Endothelial cell of umbilical vein (primary cell): ENCODE measurements at regions of chr12 and their contacts with region 1.

Region 1: GRCh38 chr12:4867384-4867783 is 42.3 kb upstream of the KCNA1 start:
- DNase-seq: no peak
- H3K4me3 ChIP-seq: no peak overlapping the region
- H3K27ac ChIP-seq: no peak overlapping the region
- H3K4me1 ChIP-seq: no peaks in the 10 kb centered on the region
- H3K27me3 ChIP-seq: no peaks in the 10 kb centered on the region
- CTCF ChIP-seq: no peak
- POLR2A ChIP-seq: no peak

Region 2: GRCh38 chr12:4849115-4849541 is 18.3 kb before region 1 on chr12:
- CTCF ChIA-PET with region 1: interaction called, 13 read pairs
- POLR2A ChIA-PET with region 1: no interaction called
- dilution Hi-C with region 1: no loop called
- intact Hi-C with region 1: no loop called
- DNase-seq: peak; percentile 32
- H3K4me3 ChIP-seq: no peak overlapping the region
- H3K27ac ChIP-seq: no peak overlapping the region
- H3K4me1 ChIP-seq: no peaks in the 10 kb centered on the region
- H3K27me3 ChIP-seq: no peaks in the 10 kb centered on the region
- CTCF ChIP-seq: peak; percentile 55 to 65
- POLR2A ChIP-seq: no peak